ENCODE measurements at regions of chr2 and their contacts with region 1.

Region 1: GRCh38 chr2:69643602-69644505 is at the start of gene AAK1:
- DNase-seq: peak; percentile 83
- ATAC-seq: peak; percentile 90
- H3K4me3 ChIP-seq: peak within 1 kb of the TSS; percentile 78 to 94 (median 88)
- H3K27ac ChIP-seq: peak within 1 kb of the TSS; percentile 92
- H3K4me1 ChIP-seq: peaks cover 48% of the 10 kb centered on the region
- H3K27me3 ChIP-seq: peaks cover 0 to 3% of the 10 kb centered on the region in 2 experiments; a peak in 1 of 5 replicates
- CTCF ChIP-seq: peak; percentile 16
- EP300 ChIP-seq: peak in 1 of 2 experiments; percentile 58; a peak in 1 of 4 replicates
- POLR2A ChIP-seq: peak; percentile 76 to 84
- RAD21 ChIP-seq: peak; percentile 19
- total RNA-seq, gene AAK1: 10.3 and 15.2 TPM in 2 replicates

Region 2: GRCh38 chr2:69549421-69549820 is 94.4 kb before region 1 on chr2:
- CTCF ChIA-PET with region 1: no interaction called
- POLR2A ChIA-PET with region 1: no interaction called
- in situ Hi-C with region 1: no loop called
- intact Hi-C with region 1: no loop called
- DNase-seq: no peak
- ATAC-seq: no peak
- H3K4me3 ChIP-seq: no peak overlapping the region
- H3K27ac ChIP-seq: no peak overlapping the region
- H3K4me1 ChIP-seq: no peaks in the 10 kb centered on the region
- H3K27me3 ChIP-seq: no peaks in the 10 kb centered on the region
- CTCF ChIP-seq: no peak
- EP300 ChIP-seq: no peak
- POLR2A ChIP-seq: no peak
- RAD21 ChIP-seq: no peak

Region 3: DNA sequence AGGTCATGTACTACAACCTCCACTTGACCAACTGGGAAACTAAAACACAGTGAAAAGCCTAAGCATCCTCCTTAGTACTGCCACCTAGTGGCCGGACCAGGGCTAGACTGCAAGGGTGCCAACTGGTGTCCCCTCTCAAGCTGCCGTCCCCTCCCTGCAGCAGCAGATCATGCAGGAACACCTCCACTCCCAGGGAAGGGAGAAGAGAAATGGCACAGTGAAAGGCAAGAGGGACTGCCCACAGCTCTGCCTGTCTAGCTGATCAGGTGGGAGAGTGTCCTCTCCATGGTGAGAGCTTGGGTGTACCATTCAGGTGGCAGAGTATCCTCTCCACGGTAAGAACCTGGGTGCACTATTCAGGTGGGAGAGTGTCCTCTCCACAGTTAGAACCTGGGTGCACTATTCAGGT is 78.4 kb before region 1 on chr2:
- CTCF ChIA-PET with region 1: no interaction called
- POLR2A ChIA-PET with region 1: interaction called, 5 read pairs
- in situ Hi-C with region 1: no loop called
- intact Hi-C with region 1: loop called (anchors 5 kb)
- DNase-seq: peak; percentile 61
- ATAC-seq: peak; percentile 94
- H3K4me3 ChIP-seq: no peak overlapping the region
- H3K27ac ChIP-seq: no peak overlapping the region
- H3K4me1 ChIP-seq: peaks cover 20% of the 10 kb centered on the region
- H3K27me3 ChIP-seq: no peaks in the 10 kb centered on the region
- CTCF ChIP-seq: peak; percentile 86
- EP300 ChIP-seq: no peak
- POLR2A ChIP-seq: no peak
- RAD21 ChIP-seq: peak; percentile 72

Region 4: DNA sequence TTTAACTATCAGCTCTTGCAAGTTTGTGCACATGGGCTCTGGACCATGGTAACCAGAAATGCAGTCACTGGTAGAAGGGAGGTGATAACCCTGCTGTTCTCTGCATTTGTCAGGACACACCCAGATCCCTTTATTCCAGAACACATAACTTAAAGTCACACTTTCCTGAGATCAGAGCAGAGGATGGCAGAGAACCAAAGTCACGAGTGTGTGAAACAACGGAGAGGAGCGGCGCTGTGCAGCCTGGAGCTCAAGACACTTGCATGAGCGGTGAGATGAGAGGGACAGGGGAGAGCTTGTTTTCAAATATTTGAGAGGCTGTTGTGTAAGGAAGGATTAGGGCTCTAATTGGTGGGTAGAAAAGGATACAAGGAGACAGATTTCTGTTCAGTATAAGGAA is 43.0 kb after region 1 on chr2:
- CTCF ChIA-PET with region 1: no interaction called
- POLR2A ChIA-PET with region 1: interaction called, 15 read pairs
- in situ Hi-C with region 1: no loop called
- intact Hi-C with region 1: no loop called
- DNase-seq: peak; percentile 86
- ATAC-seq: peak; percentile 88
- H3K4me3 ChIP-seq: no peak overlapping the region
- H3K27ac ChIP-seq: no peak overlapping the region
- H3K4me1 ChIP-seq: peaks cover 42% of the 10 kb centered on the region
- H3K27me3 ChIP-seq: peaks cover 0 to 7% of the 10 kb centered on the region in 2 experiments; a peak in 3 of 5 replicates
- CTCF ChIP-seq: peak; percentile 48
- EP300 ChIP-seq: peak in 1 of 2 experiments; percentile 36; a peak in 1 of 4 replicates
- POLR2A ChIP-seq: no peak
- RAD21 ChIP-seq: no peak

Region 5: DNA sequence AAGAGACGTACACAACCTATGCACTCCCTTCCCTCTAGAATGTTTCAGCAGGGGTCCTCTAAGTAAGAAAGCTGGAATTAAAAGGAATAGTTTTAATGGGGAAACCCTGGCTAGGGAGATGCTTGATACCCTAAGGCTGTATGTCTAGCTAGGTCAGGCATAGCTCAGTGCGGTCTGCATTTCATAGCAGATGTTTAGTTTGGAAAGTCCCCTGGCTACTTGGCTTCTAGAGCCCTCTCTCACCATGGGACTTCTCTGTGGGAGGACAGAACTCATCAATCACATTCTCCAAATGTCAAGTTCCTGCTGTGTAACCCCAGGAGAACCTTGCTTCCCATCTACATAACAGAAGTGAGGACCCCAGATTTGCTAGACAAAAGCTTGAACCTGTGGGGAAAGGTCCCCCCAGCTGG is 74.0 kb after region 1 on chr2:
- CTCF ChIA-PET with region 1: no interaction called
- POLR2A ChIA-PET with region 1: no interaction called
- in situ Hi-C with region 1: no loop called
- intact Hi-C with region 1: loop called (anchors 5 kb)
- DNase-seq: no peak
- ATAC-seq: no peak
- H3K4me3 ChIP-seq: no peak overlapping the region
- H3K27ac ChIP-seq: no peak overlapping the region
- H3K4me1 ChIP-seq: peaks cover 38% of the 10 kb centered on the region
- H3K27me3 ChIP-seq: peaks cover 0 to 24% of the 10 kb centered on the region in 2 experiments; a peak in 2 of 5 replicates
- CTCF ChIP-seq: no peak
- EP300 ChIP-seq: no peak
- POLR2A ChIP-seq: no peak
- RAD21 ChIP-seq: no peak

Region 6: GRCh38 chr2:69829256-69830046 is 185.6 kb after region 1 on chr2 and contains the start of gene GMCL1:
- CTCF ChIA-PET with region 1: no interaction called
- POLR2A ChIA-PET with region 1: no interaction called
- in situ Hi-C with region 1: no loop called
- intact Hi-C with region 1: loop called (anchors 5 kb)
- DNase-seq: peak; percentile 94
- ATAC-seq: peak; percentile 91
- H3K4me3 ChIP-seq: peak within 1 kb of the TSS; percentile 82 to 96 (median 93)
- H3K27ac ChIP-seq: peak within 1 kb of the TSS; percentile 93
- H3K4me1 ChIP-seq: peaks cover 54% of the 10 kb centered on the region
- H3K27me3 ChIP-seq: no peaks in the 10 kb centered on the region; a peak in 1 of 5 replicates
- CTCF ChIP-seq: peak; percentile 38
- EP300 ChIP-seq: peak in 1 of 2 experiments; percentile 49; a peak in 2 of 4 replicates
- POLR2A ChIP-seq: peak; percentile 97
- RAD21 ChIP-seq: no peak; the same call in 1 of the 2 replicates
- total RNA-seq, gene GMCL1: 18.7 and 24.0 TPM in 2 replicates

Measured in HepG2 (cell line).